ENCODE measurements at regions of chr19 and their contacts with region 1.

Region 1: DNA sequence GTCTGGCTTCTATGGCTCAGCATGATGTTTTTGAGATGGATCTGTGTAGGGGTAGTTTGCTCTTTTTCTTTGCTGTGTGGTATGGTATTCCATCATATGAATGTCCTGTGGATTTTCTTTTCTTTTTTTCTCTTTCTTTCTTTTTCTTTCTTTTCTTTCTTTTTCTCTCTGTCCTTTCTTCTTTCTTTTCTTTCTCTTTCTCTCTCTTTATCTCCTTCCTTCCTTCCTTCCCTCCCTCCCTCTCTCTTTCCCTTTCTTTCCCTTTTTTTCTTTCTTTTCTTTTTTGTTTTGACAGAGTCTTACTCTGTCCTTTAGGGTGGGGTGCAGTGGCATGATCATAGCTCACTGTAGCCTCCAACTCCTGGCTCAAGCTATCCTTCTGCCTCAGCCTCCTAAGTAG is 9.0 kb upstream of the HNRNPUL1 start:
- DNase-seq: no peak
- ATAC-seq: no peak
- H3K4me3 ChIP-seq: no peak overlapping the region
- H3K27ac ChIP-seq: no peak overlapping the region
- H3K4me1 ChIP-seq: no peaks in the 10 kb centered on the region
- H3K27me3 ChIP-seq: peaks cover 0 to 15% (median 0%) of the 10 kb centered on the region in 3 donors
- CTCF ChIP-seq: no peak

Region 2: GRCh38 chr19:41133260-41133659 is 121.9 kb before region 1 on chr19:
- intact Hi-C with region 1: loop called (anchors 2 to 5 kb)
- DNase-seq: no peak
- ATAC-seq: no peak
- H3K4me3 ChIP-seq: no peak overlapping the region
- H3K27ac ChIP-seq: no peak overlapping the region
- H3K4me1 ChIP-seq: no peaks in the 10 kb centered on the region
- H3K27me3 ChIP-seq: peaks cover 0 to 14% (median 0%) of the 10 kb centered on the region in 3 donors
- CTCF ChIP-seq: no peak

Region 3: GRCh38 chr19:41226053-41226873 is 28.9 kb before region 1 on chr19:
- intact Hi-C with region 1: loop called (anchors 5 kb)
- DNase-seq: peak; percentile 79 to 83
- ATAC-seq: peak; percentile 76 to 90 (median 84)
- H3K4me3 ChIP-seq: peak overlapping the region; percentile 62
- H3K27ac ChIP-seq: peak overlapping the region; percentile 46
- H3K4me1 ChIP-seq: no peaks in the 10 kb centered on the region
- H3K27me3 ChIP-seq: peaks cover 0 to 53% (median 0%) of the 10 kb centered on the region in 3 donors
- CTCF ChIP-seq: no peak